GM12878 (cell line): ENCODE measurements at regions of chr14 and their contacts with region 1.

Region 1: DNA sequence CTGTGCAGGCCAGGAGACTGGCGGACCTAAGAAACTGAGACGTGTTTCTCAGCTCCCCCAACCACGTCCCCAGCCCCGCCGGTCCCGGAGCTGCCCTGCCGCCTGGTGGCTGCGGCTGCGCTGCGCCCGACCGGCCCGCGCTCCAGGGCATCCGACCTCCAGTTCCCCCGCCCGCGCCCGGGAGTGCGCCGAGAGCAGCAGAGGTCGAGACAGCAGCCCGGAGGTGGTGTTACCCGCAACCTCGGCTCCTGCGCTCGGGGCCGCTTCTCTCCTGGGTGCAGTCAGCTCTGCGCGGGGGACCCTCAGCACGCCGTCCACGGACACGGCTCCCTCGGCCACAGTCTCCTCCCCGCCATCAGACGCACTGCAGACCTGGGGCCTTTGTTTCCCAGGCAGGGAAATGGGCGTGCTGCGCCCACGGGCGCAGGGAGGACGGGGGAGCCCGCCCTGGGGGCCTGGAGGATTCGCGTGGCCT is 21.6 kb upstream of the GPR132 start:
- DNase-seq: no peak
- ATAC-seq: peak; percentile 89
- H3K4me3 ChIP-seq: peak overlapping the region; percentile 76; the same call in 1 of the 2 replicates
- H3K27ac ChIP-seq: peak overlapping the region; percentile 76
- H3K4me1 ChIP-seq: peaks cover 27% of the 10 kb centered on the region
- H3K27me3 ChIP-seq: no peaks in the 10 kb centered on the region
- CTCF ChIP-seq: peak; percentile 70 to 96 (median 91); a peak in 5 of 6 replicates
- EP300 ChIP-seq: no peak
- POLR2A ChIP-seq: peak; percentile 69
- RAD21 ChIP-seq: peak; percentile 83

Region 2: DNA sequence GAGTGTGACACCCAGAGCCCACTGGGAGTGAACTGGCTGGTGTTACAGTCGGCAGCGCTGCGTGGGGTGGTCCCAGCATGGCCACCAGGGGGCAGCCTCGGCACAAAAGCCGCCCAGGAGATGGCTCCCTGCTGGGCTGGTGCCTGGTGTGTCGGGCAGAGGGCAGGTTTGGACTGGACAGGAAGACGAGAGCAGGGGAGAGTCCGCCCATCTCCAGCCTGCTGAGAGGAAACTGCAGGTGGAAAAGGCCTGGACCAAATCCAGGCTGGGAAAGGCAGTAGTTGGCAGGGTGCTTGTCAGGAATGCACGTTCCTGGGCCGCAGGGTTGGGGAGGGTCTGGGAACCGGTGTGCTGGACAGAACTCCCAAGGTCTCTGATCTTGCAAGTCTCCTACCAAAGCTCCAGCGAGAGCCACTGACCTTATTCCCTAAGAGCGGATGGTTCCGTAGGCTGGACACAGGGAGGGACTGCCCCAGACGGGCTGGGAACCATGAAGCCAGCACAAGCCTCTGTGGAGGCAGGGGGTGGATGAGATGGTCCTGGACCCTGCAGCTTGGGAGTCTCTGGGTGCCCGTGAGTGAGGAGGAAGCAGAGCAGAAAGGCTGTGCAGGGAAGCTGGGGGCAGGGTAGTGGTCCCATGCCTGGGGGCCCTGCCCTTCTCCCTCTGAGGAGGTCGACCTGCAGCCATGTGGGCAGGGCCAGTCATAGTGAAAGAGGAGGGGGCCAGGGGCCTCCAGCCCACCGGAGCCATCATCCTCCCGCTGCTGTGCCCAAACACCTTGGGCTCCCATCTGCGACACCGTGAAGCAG is 110.5 kb before region 1 on chr14:
- CTCF ChIA-PET with region 1: interaction called, 4 read pairs
- POLR2A ChIA-PET with region 1: no interaction called
- RAD21 ChIA-PET with region 1: interaction called, 6 read pairs
- SMC1A ChIA-PET with region 1: interaction called, 3 read pairs
- in situ Hi-C with region 1: no loop called
- intact Hi-C with region 1: loop called (anchors 1 kb)
- DNase-seq: peak; percentile 5
- ATAC-seq: peak; percentile 95
- H3K4me3 ChIP-seq: no peak overlapping the region
- H3K27ac ChIP-seq: no peak overlapping the region
- H3K4me1 ChIP-seq: no peaks in the 10 kb centered on the region; the same call in 1 of the 2 replicates
- H3K27me3 ChIP-seq: peaks cover 7 to 10% of the 10 kb centered on the region in 2 experiments
- CTCF ChIP-seq: peak; percentile 88 to 97 (median 97); a peak in 5 of 6 replicates
- EP300 ChIP-seq: no peak
- POLR2A ChIP-seq: no peak
- RAD21 ChIP-seq: peak; percentile 92

Region 3: DNA sequence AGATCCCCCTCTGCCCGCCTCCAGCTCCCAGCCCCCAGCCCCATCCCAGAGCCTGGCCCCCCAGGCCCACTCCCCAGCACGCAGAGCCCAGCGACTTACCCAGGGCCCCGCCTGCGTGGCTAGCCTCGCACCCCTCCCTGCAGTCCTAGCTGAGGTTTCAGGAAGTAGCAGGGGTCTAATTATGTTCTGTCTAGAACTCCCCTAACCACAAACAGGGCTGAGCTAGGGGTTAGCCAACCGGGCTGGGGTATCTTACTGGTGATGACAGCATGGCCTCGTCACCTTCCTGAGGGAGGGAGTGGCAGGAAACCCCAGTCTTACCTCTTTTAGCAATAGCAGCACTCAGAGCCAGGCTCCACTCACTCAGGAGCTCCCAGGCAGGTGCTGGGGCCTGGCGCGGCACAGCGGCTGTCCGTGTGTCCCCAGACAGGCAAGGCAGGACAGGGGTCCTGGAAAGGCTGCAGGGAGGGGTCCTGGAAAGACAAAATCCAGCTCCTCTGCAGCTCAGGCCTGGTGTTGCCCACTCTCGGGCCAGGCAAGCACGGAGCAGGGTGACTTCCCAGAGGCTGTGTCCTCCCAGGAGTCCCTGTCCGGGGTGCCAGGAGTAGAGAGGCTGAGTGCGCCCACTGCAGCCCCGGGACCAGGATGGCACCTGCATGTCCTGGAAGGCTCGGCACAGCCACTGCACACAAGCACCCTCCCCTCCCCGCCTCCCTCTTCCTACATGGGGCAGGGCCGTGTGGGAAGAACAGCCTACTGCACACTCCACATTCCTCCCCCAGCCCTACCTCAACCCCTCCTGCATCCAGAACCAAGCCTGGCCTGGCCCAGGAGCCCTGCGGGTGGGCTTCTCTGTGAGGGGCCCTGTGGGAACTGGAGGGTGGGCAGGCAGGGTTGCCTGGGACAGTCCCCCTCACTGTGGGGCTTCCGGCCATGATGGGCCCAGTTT is 21.3 kb before region 1 on chr14 and contains the start of gene GPR132:
- CTCF ChIA-PET with region 1: interaction called, 114 read pairs
- POLR2A ChIA-PET with region 1: interaction called, 23 read pairs
- RAD21 ChIA-PET with region 1: interaction called, 37 read pairs
- SMC1A ChIA-PET with region 1: interaction called, 47 read pairs
- in situ Hi-C with region 1: no loop called
- intact Hi-C with region 1: loop called (anchors 1 kb)
- DNase-seq: peak; percentile 93
- ATAC-seq: peak; percentile 54
- H3K4me3 ChIP-seq: peak within 1 kb of the TSS; percentile 64
- H3K27ac ChIP-seq: peak within 1 kb of the TSS; percentile 93
- H3K4me1 ChIP-seq: peaks cover 69% of the 10 kb centered on the region
- H3K27me3 ChIP-seq: no peaks in the 10 kb centered on the region
- CTCF ChIP-seq: no peak
- EP300 ChIP-seq: peak; percentile 67; a peak in 2 of 4 replicates
- POLR2A ChIP-seq: peak; percentile 91
- RAD21 ChIP-seq: no peak
- polyA plus RNA-seq, gene GPR132: 1.9 to 2.2 TPM

Region 4: GRCh38 chr14:105075379-105076295 is 11.2 kb before region 1 on chr14:
- CTCF ChIA-PET with region 1: interaction called, 67 read pairs
- POLR2A ChIA-PET with region 1: interaction called, 11 read pairs
- RAD21 ChIA-PET with region 1: interaction called, 37 read pairs
- SMC1A ChIA-PET with region 1: interaction called, 21 read pairs
- in situ Hi-C with region 1: no loop called
- intact Hi-C with region 1: loop called (anchors 1 kb)
- DNase-seq: no peak
- ATAC-seq: peak; percentile 88
- H3K4me3 ChIP-seq: no peak overlapping the region
- H3K27ac ChIP-seq: peak overlapping the region; percentile 38
- H3K4me1 ChIP-seq: peaks cover 33% of the 10 kb centered on the region
- H3K27me3 ChIP-seq: no peaks in the 10 kb centered on the region
- CTCF ChIP-seq: 0 out of 6 replicates have a peak, but pooled peaks of 1 of the 3 experiments have one; percentile 3
- EP300 ChIP-seq: no peak
- POLR2A ChIP-seq: no peak
- RAD21 ChIP-seq: no peak

Region 5: GRCh38 chr14:105168979-105169507 is 82.2 kb after region 1 on chr14:
- CTCF ChIA-PET with region 1: interaction called, 3 read pairs
- POLR2A ChIA-PET with region 1: no interaction called
- RAD21 ChIA-PET with region 1: no interaction called
- SMC1A ChIA-PET with region 1: no interaction called
- in situ Hi-C with region 1: no loop called
- intact Hi-C with region 1: loop called (anchors 10 kb)
- DNase-seq: no peak
- ATAC-seq: peak; percentile 42
- H3K4me3 ChIP-seq: no peak overlapping the region; the same call in 1 of the 2 replicates
- H3K27ac ChIP-seq: no peak overlapping the region
- H3K4me1 ChIP-seq: no peaks in the 10 kb centered on the region
- H3K27me3 ChIP-seq: peaks cover 2 to 3% of the 10 kb centered on the region in 2 experiments; a peak in 2 of 4 replicates
- CTCF ChIP-seq: peak; percentile 30 to 38 (median 37); a peak in 5 of 6 replicates
- EP300 ChIP-seq: no peak
- POLR2A ChIP-seq: no peak
- RAD21 ChIP-seq: peak; percentile 34

Region 6: GRCh38 chr14:105203057-105203531 is 116.2 kb after region 1 on chr14:
- CTCF ChIA-PET with region 1: interaction called, 6 read pairs
- POLR2A ChIA-PET with region 1: no interaction called
- RAD21 ChIA-PET with region 1: no interaction called
- SMC1A ChIA-PET with region 1: no interaction called
- in situ Hi-C with region 1: no loop called
- intact Hi-C with region 1: loop called (anchors 5 kb)
- DNase-seq: no peak
- ATAC-seq: peak; percentile 72
- H3K4me3 ChIP-seq: no peak overlapping the region
- H3K27ac ChIP-seq: no peak overlapping the region
- H3K4me1 ChIP-seq: peaks cover 7% of the 10 kb centered on the region
- H3K27me3 ChIP-seq: peaks cover 0 to 2% of the 10 kb centered on the region in 2 experiments; a peak in 2 of 4 replicates
- CTCF ChIP-seq: peak; percentile 83 to 96 (median 87)
- EP300 ChIP-seq: no peak
- POLR2A ChIP-seq: no peak
- RAD21 ChIP-seq: peak; percentile 61

Region 7: GRCh38 chr14:105351920-105352851 is 265.3 kb after region 1 on chr14:
- CTCF ChIA-PET with region 1: interaction called, 12 read pairs
- POLR2A ChIA-PET with region 1: no interaction called
- RAD21 ChIA-PET with region 1: interaction called, 13 read pairs
- SMC1A ChIA-PET with region 1: no interaction called
- in situ Hi-C with region 1: no loop called
- intact Hi-C with region 1: loop called (anchors 1 kb)
- DNase-seq: peak; percentile 54
- ATAC-seq: peak; percentile 100
- H3K4me3 ChIP-seq: no peak overlapping the region
- H3K27ac ChIP-seq: no peak overlapping the region
- H3K4me1 ChIP-seq: no peaks in the 10 kb centered on the region; the same call in 1 of the 2 replicates
- H3K27me3 ChIP-seq: no peaks in the 10 kb centered on the region
- CTCF ChIP-seq: peak; percentile 87 to 91 (median 88)
- EP300 ChIP-seq: no peak
- POLR2A ChIP-seq: no peak
- RAD21 ChIP-seq: peak; percentile 96